Naive thymus-derived CD4-positive, alpha-beta T cell (primary cell): ENCODE measurements at regions of chr16 and their contacts with region 1.

Region 1: GRCh38 chr16:85027349-85027957 is at the start of gene KIAA0513:
- DNase-seq: peak; percentile 93 to 100 (median 97)
- ATAC-seq: peak; percentile 87
- H3K4me3 ChIP-seq: peak within 1 kb of the TSS; percentile 85
- H3K4me3 Mint-ChIP-seq: peak within 1 kb of the TSS; percentile 88 to 94 (median 92)
- H3K27ac ChIP-seq: peak within 1 kb of the TSS; percentile 93
- H3K27ac Mint-ChIP-seq: peak within 1 kb of the TSS; percentile 73 to 96 (median 94)
- H3K4me1 ChIP-seq: peaks cover 22 to 23% of the 10 kb centered on the region in 2 donors
- H3K4me1 Mint-ChIP-seq: peaks cover 25 to 40% (median 33%) of the 10 kb centered on the region in 7 donors
- H3K27me3 ChIP-seq: no peaks in the 10 kb centered on the region
- H3K27me3 Mint-ChIP-seq: no peaks in the 10 kb centered on the region
- total RNA-seq, gene KIAA0513: 9.5 to 28.9 (median 15.1) TPM

Region 2: DNA sequence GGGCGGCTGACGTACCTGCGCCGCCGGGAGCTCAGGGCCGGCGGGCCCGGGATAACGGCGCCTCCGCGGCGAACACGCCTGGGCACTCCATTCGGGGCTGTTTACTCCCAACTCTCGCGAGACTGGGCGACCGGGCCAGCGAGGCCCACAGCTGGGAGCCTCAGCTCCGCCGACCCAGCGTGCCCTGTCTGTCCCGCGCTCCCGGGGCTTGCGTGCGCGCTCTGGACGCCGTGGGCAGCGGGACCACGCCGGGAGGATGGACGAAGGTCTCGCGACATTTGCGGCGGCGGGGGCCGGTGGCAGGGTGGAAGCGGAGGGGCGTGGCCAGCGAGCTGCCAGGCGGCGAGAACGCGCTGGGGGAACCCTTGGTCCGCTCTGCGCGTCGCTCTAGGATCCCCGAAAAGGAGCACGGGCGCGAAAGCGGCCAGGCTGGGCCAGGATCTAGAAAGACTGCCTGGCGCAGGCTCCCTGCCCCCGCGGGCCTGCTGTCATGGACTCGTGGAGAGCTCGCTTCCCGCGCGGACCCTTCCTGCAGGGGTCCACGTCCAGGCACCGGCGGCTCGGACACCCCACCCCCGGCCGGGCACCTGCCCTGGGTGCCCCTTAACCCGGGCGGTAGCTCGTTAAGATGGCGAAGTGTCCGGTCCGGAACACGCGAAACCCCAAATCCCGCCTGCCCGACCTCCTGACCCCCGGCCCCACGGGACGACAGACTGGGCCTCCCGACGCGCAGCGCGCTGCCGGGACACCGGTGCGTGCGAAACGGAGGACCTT is 910.5 kb before region 1 on chr16 and contains the start of gene MBTPS1:
- CTCF ChIA-PET with region 1: no interaction called
- POLR2A ChIA-PET with region 1: interaction called, 3 read pairs
- intact Hi-C with region 1: loop called in 1 of 2 experiments (anchors 2 kb)
- DNase-seq: peak; percentile 94 to 99 (median 97)
- ATAC-seq: peak; percentile 92
- H3K4me3 ChIP-seq: peak within 1 kb of the TSS; percentile 99
- H3K4me3 Mint-ChIP-seq: peak within 1 kb of the TSS; percentile 90 to 96 (median 94)
- H3K27ac ChIP-seq: peak within 1 kb of the TSS; percentile 86
- H3K27ac Mint-ChIP-seq: peak within 1 kb of the TSS; percentile 93 to 98 (median 96)
- H3K4me1 ChIP-seq: peaks cover 14 to 18% of the 10 kb centered on the region in 2 donors
- H3K4me1 Mint-ChIP-seq: peaks cover 6 to 36% (median 23%) of the 10 kb centered on the region in 7 donors
- H3K27me3 ChIP-seq: no peaks in the 10 kb centered on the region
- H3K27me3 Mint-ChIP-seq: no peaks in the 10 kb centered on the region
- total RNA-seq, gene MBTPS1: 65.3 to 157 (median 138) TPM

Region 3: DNA sequence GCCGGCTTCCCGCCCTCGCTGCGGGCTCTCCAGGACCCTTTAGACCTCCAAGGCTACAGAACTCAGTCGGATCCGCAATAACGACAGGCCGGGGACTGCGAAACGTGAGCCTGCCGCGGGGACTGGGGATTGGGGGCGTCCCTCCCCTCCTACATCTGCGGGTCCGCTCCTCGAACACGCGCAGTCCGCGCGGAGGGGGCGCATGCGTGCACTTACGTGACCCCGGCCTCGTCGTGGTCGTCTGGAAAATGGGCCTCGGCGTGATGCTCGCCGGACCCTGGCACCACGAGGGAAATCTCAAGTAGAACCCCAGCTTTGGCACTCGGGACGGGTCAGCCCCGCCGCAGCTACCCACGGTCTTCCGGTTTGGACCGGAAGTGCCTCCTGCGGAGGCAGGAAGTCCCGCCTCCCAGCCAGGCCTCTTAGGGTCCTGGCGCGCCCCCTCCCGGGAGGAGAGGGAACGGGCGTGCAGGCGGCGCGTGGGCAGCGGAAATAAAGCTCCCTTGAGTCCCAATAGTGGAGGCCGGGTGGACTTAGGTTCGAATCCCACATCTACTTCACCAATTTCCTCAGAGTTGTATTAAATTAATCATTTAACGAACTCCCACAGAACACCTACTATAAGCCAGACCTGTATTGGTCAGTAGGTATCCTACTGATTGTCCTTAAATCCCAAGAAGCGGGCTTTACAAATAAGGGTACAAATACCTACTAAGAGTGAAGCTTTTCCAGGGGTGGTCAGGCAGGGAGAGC is 840.6 kb before region 1 on chr16 and contains the start of gene TAF1C:
- CTCF ChIA-PET with region 1: no interaction called
- POLR2A ChIA-PET with region 1: no interaction called
- intact Hi-C with region 1: loop called in 1 of 2 experiments (anchors 5 kb)
- DNase-seq: peak; percentile 81 to 94 (median 87)
- ATAC-seq: peak; percentile 99
- H3K4me3 ChIP-seq: peak within 1 kb of the TSS; percentile 91
- H3K4me3 Mint-ChIP-seq: peak within 1 kb of the TSS; percentile 89 to 94 (median 92)
- H3K27ac ChIP-seq: peak within 1 kb of the TSS; percentile 80
- H3K27ac Mint-ChIP-seq: peak within 1 kb of the TSS; percentile 78 to 95 (median 91)
- H3K4me1 ChIP-seq: peaks cover 0 to 6% of the 10 kb centered on the region in 2 donors
- H3K4me1 Mint-ChIP-seq: peaks cover 22 to 29% (median 25%) of the 10 kb centered on the region in 7 donors
- H3K27me3 ChIP-seq: no peaks in the 10 kb centered on the region
- H3K27me3 Mint-ChIP-seq: no peaks in the 10 kb centered on the region
- total RNA-seq, gene TAF1C: 62.6 to 127 (median 85.4) TPM

Region 4: DNA sequence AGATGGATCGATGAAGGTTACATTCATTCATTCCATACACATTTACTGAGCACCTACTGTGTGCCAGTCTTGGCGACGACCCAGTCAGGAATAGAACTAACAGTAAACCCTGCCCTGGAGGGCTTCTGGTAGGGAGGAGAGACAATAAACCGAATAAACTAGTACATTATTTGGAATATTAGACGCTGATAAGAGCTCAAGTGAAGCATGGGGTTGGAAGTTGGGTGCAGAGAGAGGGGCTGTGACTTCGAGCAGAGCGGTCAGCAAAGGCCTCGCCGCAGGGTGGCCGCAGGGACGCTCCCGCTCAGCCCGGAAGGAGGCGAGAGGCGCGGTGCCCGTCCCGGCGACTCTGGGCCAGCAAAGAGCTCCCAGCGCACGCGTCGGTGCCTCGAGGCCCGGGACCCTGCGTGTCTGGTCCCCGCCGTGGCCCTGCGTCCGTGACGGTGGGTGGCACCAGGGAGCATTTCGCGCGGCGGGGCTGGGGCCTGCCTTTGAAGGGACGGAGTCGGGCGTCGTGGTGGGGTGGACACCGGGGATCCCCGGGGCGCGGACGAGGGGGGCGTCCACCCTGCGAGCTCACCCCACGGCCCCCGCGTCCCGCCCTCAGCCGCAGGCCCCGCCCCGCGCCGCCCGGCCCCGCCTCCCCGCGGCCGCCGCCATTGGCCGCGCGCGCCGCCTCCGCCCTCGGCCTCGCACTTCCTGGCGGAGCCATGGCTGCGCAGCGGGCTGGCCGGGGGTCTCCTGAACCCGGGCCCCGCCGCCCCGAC is 379.4 kb before region 1 on chr16 and contains the start of gene KLHL36:
- CTCF ChIA-PET with region 1: no interaction called
- POLR2A ChIA-PET with region 1: interaction called, 3 read pairs
- intact Hi-C with region 1: loop called in 1 of 2 experiments (anchors 10 kb)
- DNase-seq: peak; percentile 59 to 89 (median 70)
- ATAC-seq: peak; percentile 92
- H3K4me3 ChIP-seq: peak within 1 kb of the TSS; percentile 73
- H3K4me3 Mint-ChIP-seq: peak within 1 kb of the TSS; percentile 86 to 98 (median 93)
- H3K27ac ChIP-seq: peak within 1 kb of the TSS; percentile 81
- H3K27ac Mint-ChIP-seq: peak within 1 kb of the TSS; percentile 85 to 99 (median 92)
- H3K4me1 ChIP-seq: peaks cover 19 to 41% of the 10 kb centered on the region in 2 donors
- H3K4me1 Mint-ChIP-seq: peaks cover 38 to 54% (median 49%) of the 10 kb centered on the region in 7 donors
- H3K27me3 ChIP-seq: no peaks in the 10 kb centered on the region
- H3K27me3 Mint-ChIP-seq: peaks cover 0 to 35% (median 0%) of the 10 kb centered on the region in 5 donors
- total RNA-seq, gene KLHL36: 51.8 to 161 (median 97.8) TPM

Region 5: DNA sequence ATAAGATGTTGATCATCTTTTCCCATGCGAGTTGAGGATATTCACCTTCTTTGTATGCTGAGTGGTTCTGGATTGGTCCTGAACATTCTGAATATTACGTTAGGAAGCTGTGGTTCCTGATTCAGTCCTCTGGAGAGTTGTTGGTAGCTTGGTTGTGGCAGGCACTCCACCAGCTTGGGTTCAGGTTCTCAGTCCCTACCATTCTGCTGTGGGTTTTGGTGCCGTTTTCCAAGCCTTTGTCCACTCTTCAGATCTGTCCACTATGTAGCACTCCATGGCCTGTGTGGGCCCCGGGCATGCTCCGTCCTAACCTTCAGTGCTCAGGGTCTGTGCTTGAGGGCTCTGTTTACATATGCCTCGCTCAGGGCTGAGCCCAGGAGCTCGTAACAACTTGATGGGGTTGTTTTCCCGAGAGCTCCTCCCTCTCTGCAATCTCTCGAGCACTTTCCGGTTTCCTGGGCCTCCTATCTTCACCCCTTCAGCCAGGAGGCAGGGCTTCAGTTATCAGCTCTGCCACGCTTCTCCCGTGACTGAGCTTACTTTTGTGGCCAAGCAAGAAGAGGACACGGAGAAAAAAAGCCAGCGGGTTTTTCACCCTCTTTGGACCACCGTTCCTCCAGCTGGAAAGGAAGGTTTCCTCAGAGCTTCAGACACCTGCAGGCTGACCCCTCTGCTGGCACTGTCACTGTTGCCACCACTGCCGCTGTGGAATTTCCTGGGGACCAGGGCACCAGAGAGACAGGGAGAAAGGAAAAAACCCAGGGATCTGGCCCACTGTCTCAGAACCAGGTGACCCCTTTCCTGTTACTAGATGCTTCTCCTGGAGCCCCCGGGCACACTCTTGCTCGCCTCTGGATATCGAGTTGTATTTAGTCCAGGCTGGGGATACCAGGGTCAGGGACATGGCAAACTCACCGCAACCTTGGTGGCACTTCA is 19.7 kb after region 1 on chr16:
- CTCF ChIA-PET with region 1: interaction called, 4 read pairs
- POLR2A ChIA-PET with region 1: interaction called, 16 read pairs
- intact Hi-C with region 1: loop called in 1 of 2 experiments (anchors 2 kb)
- DNase-seq: peak in 5 of 9 donors; percentile 12 to 50 (median 24)
- ATAC-seq: peak; percentile 63
- H3K4me3 ChIP-seq: peak overlapping the region; percentile 39
- H3K4me3 Mint-ChIP-seq: peak overlapping the region; percentile 56 to 86 (median 76)
- H3K27ac ChIP-seq: peak overlapping the region; percentile 33
- H3K27ac Mint-ChIP-seq: peak overlapping the region; percentile 56 to 95 (median 86)
- H3K4me1 ChIP-seq: peaks cover 0 to 21% of the 10 kb centered on the region in 2 donors
- H3K4me1 Mint-ChIP-seq: peaks cover 5 to 47% (median 27%) of the 10 kb centered on the region in 7 donors
- H3K27me3 ChIP-seq: no peaks in the 10 kb centered on the region
- H3K27me3 Mint-ChIP-seq: no peaks in the 10 kb centered on the region

Region 6: GRCh38 chr16:85086347-85087291 is 59.2 kb after region 1 on chr16:
- CTCF ChIA-PET with region 1: interaction called, 20 read pairs
- POLR2A ChIA-PET with region 1: interaction called, 6 read pairs
- intact Hi-C with region 1: loop called (anchors 1 kb)
- DNase-seq: peak; percentile 44 to 78 (median 74)
- ATAC-seq: peak; percentile 88
- H3K4me3 ChIP-seq: no peak overlapping the region
- H3K4me3 Mint-ChIP-seq: no peak overlapping the region
- H3K27ac ChIP-seq: no peak overlapping the region
- H3K27ac Mint-ChIP-seq: peak overlapping the region in 3 of 9 donors; percentile 23 to 59 (median 43)
- H3K4me1 ChIP-seq: no peaks in the 10 kb centered on the region
- H3K4me1 Mint-ChIP-seq: peaks cover 6 to 31% (median 15%) of the 10 kb centered on the region in 7 donors
- H3K27me3 ChIP-seq: no peaks in the 10 kb centered on the region
- H3K27me3 Mint-ChIP-seq: peaks cover 0 to 2% (median 0%) of the 10 kb centered on the region in 5 donors

Region 7: GRCh38 chr16:85220125-85220839 is 192.8 kb after region 1 on chr16:
- CTCF ChIA-PET with region 1: no interaction called
- POLR2A ChIA-PET with region 1: no interaction called
- intact Hi-C with region 1: no loop called
- DNase-seq: no peak
- ATAC-seq: no peak
- H3K4me3 ChIP-seq: no peak overlapping the region
- H3K4me3 Mint-ChIP-seq: peak overlapping the region in 1 of 10 donors; percentile 44
- H3K27ac ChIP-seq: no peak overlapping the region
- H3K27ac Mint-ChIP-seq: no peak overlapping the region
- H3K4me1 ChIP-seq: no peaks in the 10 kb centered on the region
- H3K4me1 Mint-ChIP-seq: no peaks in the 10 kb centered on the region
- H3K27me3 ChIP-seq: no peaks in the 10 kb centered on the region
- H3K27me3 Mint-ChIP-seq: peaks cover 0 to 3% (median 0%) of the 10 kb centered on the region in 5 donors

Region 8: DNA sequence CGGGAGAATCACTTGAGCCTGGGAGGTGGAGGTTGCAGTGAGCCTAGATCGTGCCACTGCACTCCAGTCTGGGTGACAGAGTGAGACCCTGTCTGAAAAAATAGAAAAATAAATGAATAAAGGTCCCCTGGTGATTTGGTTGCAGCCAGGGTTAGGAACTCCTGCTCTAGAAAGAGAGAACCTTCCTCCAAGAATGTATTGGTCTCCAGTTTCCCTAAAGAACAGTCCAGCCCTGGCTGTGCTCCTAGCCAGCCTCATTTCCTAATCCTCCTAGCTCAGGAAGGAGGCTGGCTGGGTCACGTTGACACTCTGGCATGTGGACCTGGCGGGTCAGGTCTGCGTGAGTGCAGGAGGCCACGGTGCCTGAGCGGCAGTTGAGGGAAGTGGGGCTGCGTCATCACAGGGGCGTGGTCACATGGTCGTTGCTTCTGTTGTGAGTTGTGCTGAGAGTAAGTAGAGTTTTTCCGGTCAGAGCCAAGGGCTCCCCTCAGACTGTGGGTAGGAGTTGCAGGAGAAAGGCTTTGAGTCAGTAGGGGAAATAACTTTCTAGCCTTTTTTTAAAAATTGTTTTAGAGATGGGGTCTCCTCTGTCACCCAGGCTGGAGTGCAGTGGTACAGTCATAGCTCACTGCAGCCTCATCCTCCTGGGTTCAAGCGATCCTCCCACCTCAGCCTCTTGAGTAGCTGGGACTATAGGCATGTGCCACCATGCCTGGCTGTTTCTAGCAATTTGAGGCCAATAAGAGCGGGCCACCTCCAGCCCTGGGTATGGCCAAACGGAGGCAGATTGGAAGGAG is 278.7 kb after region 1 on chr16:
- CTCF ChIA-PET with region 1: no interaction called
- POLR2A ChIA-PET with region 1: no interaction called
- intact Hi-C with region 1: loop called in 1 of 2 experiments (anchors 2 kb)
- DNase-seq: peak; percentile 61 to 87 (median 85)
- ATAC-seq: peak; percentile 88
- H3K4me3 ChIP-seq: no peak overlapping the region
- H3K4me3 Mint-ChIP-seq: peak overlapping the region; percentile 45 to 86 (median 61)
- H3K27ac ChIP-seq: peak overlapping the region; percentile 57
- H3K27ac Mint-ChIP-seq: peak overlapping the region; percentile 86 to 98 (median 94)
- H3K4me1 ChIP-seq: peaks cover 0 to 70% of the 10 kb centered on the region in 2 donors
- H3K4me1 Mint-ChIP-seq: peaks cover 20 to 74% (median 56%) of the 10 kb centered on the region in 7 donors
- H3K27me3 ChIP-seq: no peaks in the 10 kb centered on the region
- H3K27me3 Mint-ChIP-seq: no peaks in the 10 kb centered on the region